ENCODE measurements at regions of chr12 and their contacts with region 1.

Region 1: DNA sequence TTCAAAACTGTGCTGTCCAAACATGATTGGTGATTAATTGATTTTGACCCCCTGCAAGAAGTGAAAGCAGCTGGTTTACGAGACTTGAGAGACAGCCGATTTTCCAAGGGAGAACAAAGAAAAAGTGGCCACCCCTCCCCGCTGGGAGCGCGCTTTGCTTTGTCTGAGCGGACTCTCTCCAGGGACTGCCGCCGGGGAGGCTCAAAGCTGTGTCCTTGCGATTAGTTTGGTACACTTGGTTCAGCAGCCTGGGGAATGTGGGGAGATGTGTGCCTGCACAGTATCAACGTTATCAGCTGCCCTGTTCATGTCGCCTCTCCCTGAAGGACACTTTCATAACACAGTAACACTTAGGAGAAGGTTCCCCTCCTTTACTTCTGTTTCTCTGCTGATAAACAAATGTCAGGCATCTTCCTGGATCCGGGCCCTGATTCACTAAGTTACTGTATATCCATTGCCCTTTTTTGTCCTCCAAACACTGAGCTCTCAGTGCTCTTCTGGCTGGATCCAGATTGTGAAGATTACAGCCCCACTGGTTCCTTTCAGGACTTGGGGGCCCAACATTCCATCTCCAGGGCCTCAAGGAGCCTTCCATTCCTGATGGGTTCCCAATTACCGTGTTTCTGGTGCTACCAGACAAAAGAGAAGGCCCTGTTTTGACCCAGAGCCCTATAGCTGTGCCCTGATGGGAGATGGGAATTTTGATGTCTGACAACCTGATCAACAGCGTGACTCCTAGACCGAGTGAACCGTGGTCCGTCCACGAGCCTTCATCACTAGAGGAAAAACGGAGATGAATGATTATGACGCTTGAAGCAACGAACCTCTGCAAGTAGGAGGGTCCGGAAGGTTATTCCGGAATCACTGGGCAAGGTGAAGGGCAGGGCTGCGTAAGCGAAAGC is 31.7 kb upstream of the TUBA1C start:
- DNase-seq: peak; percentile 11
- H3K4me3 ChIP-seq: no peak overlapping the region
- H3K27ac ChIP-seq: peak overlapping the region; percentile 38 to 54
- H3K4me1 ChIP-seq: no peaks in the 10 kb centered on the region
- H3K27me3 ChIP-seq: no peaks in the 10 kb centered on the region
- CTCF ChIP-seq: no peak
- POLR2A ChIP-seq: no peak

Region 2: GRCh38 chr12:49088190-49088931 is 144.8 kb before region 1 on chr12:
- intact Hi-C with region 1: loop called (anchors 2 kb)
- DNase-seq: peak; percentile 68
- H3K4me3 ChIP-seq: no peak overlapping the region
- H3K27ac ChIP-seq: no peak overlapping the region
- H3K4me1 ChIP-seq: peaks cover 5% of the 10 kb centered on the region
- H3K27me3 ChIP-seq: peaks cover 27% of the 10 kb centered on the region
- CTCF ChIP-seq: peak; percentile 68 to 88 (median 80)
- POLR2A ChIP-seq: no peak

Region 3: DNA sequence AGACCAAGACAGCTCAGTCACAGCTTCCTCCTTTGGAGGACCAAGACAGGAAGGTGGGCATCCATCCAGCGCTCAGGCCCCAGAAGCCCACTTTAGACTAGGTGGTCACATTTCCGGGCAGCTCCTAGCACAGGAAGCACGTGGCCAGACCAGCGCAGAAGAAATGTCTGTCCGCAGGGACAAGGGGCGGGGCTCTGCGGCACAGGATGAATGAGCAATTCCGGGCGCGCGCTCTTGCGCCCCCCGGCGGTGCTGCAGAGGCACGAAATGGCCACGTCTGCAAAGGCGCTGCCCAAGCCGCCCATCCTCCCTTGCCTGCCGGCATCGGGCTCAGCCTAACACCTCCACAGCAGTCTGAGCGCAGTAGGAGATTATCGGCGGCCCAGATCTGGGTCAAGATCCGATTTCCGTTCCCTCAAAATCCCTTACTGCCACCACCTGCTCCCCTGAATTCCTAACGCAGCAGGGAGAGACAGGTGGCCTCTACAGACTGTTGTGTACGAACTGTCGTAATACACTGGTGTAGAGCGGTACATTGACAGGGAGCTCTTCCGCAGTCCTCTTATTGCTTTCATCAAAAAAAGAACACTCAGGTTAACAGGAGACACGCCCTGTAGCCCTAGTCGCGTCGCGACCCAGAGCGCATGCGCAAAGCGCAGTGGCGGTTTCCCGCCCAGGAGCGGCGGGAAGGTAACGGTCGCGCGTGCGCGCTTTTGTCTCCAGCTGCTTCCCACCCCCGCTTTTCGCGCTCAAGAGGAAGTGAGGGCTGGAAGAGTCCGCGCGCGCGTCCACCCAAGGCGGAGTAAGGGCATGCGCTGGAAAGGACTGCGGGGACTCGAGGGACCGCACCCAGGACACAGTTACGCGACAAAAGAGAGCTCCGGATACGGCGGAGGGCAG is 102.8 kb before region 1 on chr12:
- intact Hi-C with region 1: loop called (anchors 1 kb)
- DNase-seq: peak; percentile 92
- H3K4me3 ChIP-seq: peak overlapping the region; percentile 85 to 97
- H3K27ac ChIP-seq: peak overlapping the region; percentile 98 to 100
- H3K4me1 ChIP-seq: no peaks in the 10 kb centered on the region
- H3K27me3 ChIP-seq: no peaks in the 10 kb centered on the region
- CTCF ChIP-seq: peak; percentile 73 to 93 (median 89)
- POLR2A ChIP-seq: peak; percentile 66

Region 4: GRCh38 chr12:49188914-49189367 is 44.2 kb before region 1 on chr12 and contains the start of gene TUBA1A:
- intact Hi-C with region 1: loop called (anchors 1 kb)
- DNase-seq: peak; percentile 86
- H3K4me3 ChIP-seq: peak within 1 kb of the TSS; percentile 63 to 77
- H3K27ac ChIP-seq: peak within 1 kb of the TSS; percentile 93 to 98
- H3K4me1 ChIP-seq: peaks cover 2% of the 10 kb centered on the region
- H3K27me3 ChIP-seq: no peaks in the 10 kb centered on the region
- CTCF ChIP-seq: no peak
- POLR2A ChIP-seq: peak; percentile 89
- total RNA-seq, gene TUBA1A: 81.6 to 253 TPM

Region 5: GRCh38 chr12:49264738-49265515 is 31.7 kb after region 1 on chr12 and contains the start of gene TUBA1C:
- intact Hi-C with region 1: no loop called
- DNase-seq: peak; percentile 91
- H3K4me3 ChIP-seq: peak within 1 kb of the TSS; percentile 67 to 81
- H3K27ac ChIP-seq: peak within 1 kb of the TSS; percentile 78 to 82
- H3K4me1 ChIP-seq: no peaks in the 10 kb centered on the region
- H3K27me3 ChIP-seq: no peaks in the 10 kb centered on the region
- CTCF ChIP-seq: peak in 1 of 4 experiments; percentile 11
- POLR2A ChIP-seq: peak; percentile 52
- total RNA-seq, gene TUBA1C: 81.9 to 85.6 TPM

Region 6: DNA sequence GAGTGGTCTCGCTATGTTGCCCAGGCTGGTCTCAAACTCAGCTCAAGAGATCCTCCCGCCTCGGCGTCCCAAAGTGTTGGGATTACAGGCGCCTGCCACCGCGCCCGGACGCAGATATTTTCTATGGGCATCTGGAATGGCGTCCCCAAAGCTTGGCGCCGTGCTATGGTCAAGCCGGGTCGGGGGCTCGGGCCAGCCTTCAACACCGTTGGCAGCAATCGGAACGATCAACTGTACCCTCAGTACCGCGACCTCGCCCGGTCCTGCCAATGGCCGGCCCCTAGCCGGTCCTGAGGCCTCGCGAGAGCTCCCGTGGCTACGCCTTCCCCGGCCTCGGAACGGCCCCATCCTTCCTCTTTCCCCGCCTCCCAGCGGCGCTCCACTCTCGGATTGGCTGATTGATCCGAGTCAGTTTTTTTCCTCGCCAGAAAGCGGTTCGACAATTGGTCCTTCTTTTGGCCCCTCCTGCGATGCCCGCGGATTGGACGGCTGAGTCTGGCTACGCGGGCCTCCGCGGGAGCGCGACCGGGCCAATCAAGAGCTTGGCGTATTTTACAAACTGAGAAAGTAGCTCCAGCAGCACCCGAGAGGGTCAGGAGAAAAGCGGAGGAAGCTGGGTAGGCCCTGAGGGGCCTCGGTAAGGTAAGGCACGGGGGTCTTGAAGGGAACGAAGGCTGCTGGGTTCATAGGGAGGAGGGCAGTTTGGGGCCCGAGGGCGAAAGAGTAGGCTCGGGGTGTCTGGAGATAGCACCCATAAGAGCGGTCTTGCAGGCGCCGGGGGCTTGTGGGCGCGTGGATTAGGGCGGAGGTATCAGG is 89.7 kb after region 1 on chr12 and contains the start of gene TROAP:
- intact Hi-C with region 1: no loop called
- DNase-seq: peak; percentile 97
- H3K4me3 ChIP-seq: peak within 1 kb of the TSS; percentile 44 to 46
- H3K27ac ChIP-seq: peak within 1 kb of the TSS; percentile 36 to 48
- H3K4me1 ChIP-seq: no peaks in the 10 kb centered on the region
- H3K27me3 ChIP-seq: no peaks in the 10 kb centered on the region
- CTCF ChIP-seq: peak in 2 of 4 experiments; percentile 6 to 27
- POLR2A ChIP-seq: peak; percentile 51
- total RNA-seq, gene TROAP: 0.46 to 5.2 TPM

Measured in prostate gland (tissue), 2 donors.